ENCODE measurements at regions of chr4 and their contacts with region 1.

Region 1: DNA sequence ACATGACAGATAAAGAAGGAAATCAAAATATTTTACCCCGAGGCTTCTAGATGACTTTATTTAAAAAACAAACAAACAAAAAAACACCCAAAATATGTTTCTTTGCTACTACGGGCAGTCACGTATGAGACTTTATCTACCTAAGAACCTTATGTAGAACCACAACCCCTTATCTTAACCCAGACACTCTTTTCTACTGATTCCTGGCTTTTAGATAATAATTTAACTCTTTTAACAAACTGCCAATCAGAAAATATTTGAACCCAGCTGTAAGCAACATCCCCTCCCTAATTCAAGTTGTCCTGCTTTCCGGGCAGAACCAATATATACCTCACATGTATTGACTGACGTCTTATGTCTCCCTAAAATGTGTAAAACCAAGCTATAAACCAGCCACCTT is 15.4 kb downstream of the ELOVL6 start:
- DNase-seq: no peak
- ATAC-seq: no peak
- H3K4me3 ChIP-seq: no peak overlapping the region
- H3K27ac ChIP-seq: no peak overlapping the region
- H3K4me1 ChIP-seq: no peaks in the 10 kb centered on the region
- H3K27me3 ChIP-seq: no peaks in the 10 kb centered on the region
- CTCF ChIP-seq: no peak

Region 2: DNA sequence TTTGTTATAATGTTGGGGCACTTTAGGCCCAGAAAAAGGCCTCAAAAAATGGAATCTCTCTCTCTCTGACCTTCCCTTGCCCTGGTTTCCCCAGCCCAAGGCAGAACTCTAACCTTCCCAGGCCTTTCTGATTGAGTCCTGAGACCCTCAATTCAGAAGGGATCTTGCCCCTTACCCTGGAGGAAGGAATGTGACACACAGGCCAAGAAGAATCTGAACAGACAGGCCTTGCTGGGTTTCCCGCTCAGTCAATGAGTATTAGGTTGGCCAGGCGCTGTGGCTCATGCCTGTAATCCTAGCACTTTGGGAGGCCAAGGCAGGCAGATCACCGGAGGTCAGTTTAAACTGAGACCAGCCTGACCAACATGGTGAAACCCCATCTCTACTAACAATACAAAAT is 12.2 kb before region 1 on chr4:
- CTCF ChIA-PET with region 1: no interaction called
- POLR2A ChIA-PET with region 1: interaction called, 14 read pairs
- in situ Hi-C with region 1: no loop called
- intact Hi-C with region 1: no loop called
- DNase-seq: no peak
- ATAC-seq: no peak
- H3K4me3 ChIP-seq: no peak overlapping the region
- H3K27ac ChIP-seq: no peak overlapping the region
- H3K4me1 ChIP-seq: no peaks in the 10 kb centered on the region
- H3K27me3 ChIP-seq: no peaks in the 10 kb centered on the region
- CTCF ChIP-seq: no peak

Measured in Panc1 (cell line).